ENCODE measurements at regions of chr7 and their contacts with region 1.

Region 1: DNA sequence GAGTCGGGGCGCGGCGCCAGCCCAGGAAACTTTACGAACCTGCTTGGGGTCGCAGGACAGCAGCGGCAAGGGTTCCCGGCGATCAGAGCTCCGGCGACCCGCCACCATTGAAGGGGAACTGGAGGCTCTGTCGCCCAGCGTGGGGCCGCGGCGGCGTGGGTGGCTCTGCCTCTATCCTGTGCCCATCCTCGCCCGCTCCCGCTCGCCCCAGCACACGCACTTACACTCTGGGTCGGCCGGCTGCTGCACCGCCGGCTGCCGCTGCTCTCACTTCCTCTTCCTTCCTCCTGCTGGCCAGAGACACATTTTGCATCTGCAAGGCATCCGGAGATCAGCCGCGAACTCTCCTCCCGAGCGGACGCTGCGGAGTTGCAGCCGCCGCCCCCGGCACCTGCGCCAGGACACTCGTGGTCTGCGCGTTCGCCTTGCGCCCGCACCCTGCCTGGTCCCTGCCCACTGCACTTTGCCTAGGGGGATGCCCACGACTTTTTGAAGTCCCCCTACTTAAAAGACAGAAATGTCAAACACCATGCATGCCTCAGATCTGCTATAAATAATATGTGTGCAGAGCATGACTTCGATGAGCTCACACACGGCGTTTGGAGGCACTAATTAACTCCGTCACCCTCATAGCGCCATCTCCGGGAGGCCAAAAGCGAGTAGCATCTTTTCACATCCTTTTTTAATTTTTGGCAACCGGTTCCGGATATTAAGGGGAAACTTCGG is at the start of gene ELMO1:
- DNase-seq: peak; percentile 85 to 89 (median 88)
- H3K4me3 ChIP-seq: peak within 1 kb of the TSS; percentile 31 to 78
- H3K4me3 Mint-ChIP-seq: peak within 1 kb of the TSS; percentile 96 to 99 (median 98)
- H3K27ac ChIP-seq: peak within 1 kb of the TSS; percentile 85
- H3K27ac Mint-ChIP-seq: peak within 1 kb of the TSS; percentile 97 to 100 (median 99)
- H3K4me1 ChIP-seq: peaks cover 44% of the 10 kb centered on the region
- H3K4me1 Mint-ChIP-seq: peaks cover 39 to 62% (median 49%) of the 10 kb centered on the region in 4 donors
- H3K27me3 ChIP-seq: no peaks in the 10 kb centered on the region
- H3K27me3 Mint-ChIP-seq: peaks cover 2 to 3% of the 10 kb centered on the region in 2 donors
- total RNA-seq, gene ELMO1: 123 to 131 TPM

Region 2: GRCh38 chr7:36723951-36724664 is 724.7 kb before region 1 on chr7 and contains the start of gene AOAH:
- CTCF ChIA-PET with region 1: no interaction called
- POLR2A ChIA-PET with region 1: no interaction called
- intact Hi-C with region 1: loop called (anchors 5 kb)
- DNase-seq: peak; percentile 81 to 87 (median 82)
- H3K4me3 ChIP-seq: peak within 1 kb of the TSS in 1 of 2 donors; percentile 34
- H3K4me3 Mint-ChIP-seq: peak within 1 kb of the TSS; percentile 57 to 91 (median 83)
- H3K27ac ChIP-seq: peak within 1 kb of the TSS; percentile 37
- H3K27ac Mint-ChIP-seq: peak within 1 kb of the TSS; percentile 78 to 95 (median 91)
- H3K4me1 ChIP-seq: peaks cover 72% of the 10 kb centered on the region
- H3K4me1 Mint-ChIP-seq: peaks cover 54 to 83% (median 67%) of the 10 kb centered on the region in 4 donors
- H3K27me3 ChIP-seq: no peaks in the 10 kb centered on the region
- H3K27me3 Mint-ChIP-seq: no peaks in the 10 kb centered on the region
- total RNA-seq, gene AOAH: 4.5 to 5.4 TPM

Region 3: GRCh38 chr7:37234928-37235327 is 213.9 kb before region 1 on chr7:
- CTCF ChIA-PET with region 1: interaction called, 9 read pairs
- POLR2A ChIA-PET with region 1: interaction called, 5 read pairs
- intact Hi-C with region 1: loop called (anchors 2 kb)
- DNase-seq: peak; percentile 11 to 39 (median 24)
- H3K4me3 ChIP-seq: no peak overlapping the region
- H3K4me3 Mint-ChIP-seq: no peak overlapping the region
- H3K27ac ChIP-seq: no peak overlapping the region
- H3K27ac Mint-ChIP-seq: peak overlapping the region in 3 of 7 donors; percentile 37 to 77 (median 51)
- H3K4me1 ChIP-seq: peaks cover 16% of the 10 kb centered on the region
- H3K4me1 Mint-ChIP-seq: peaks cover 23 to 33% (median 28%) of the 10 kb centered on the region in 4 donors
- H3K27me3 ChIP-seq: no peaks in the 10 kb centered on the region
- H3K27me3 Mint-ChIP-seq: no peaks in the 10 kb centered on the region

Region 4: GRCh38 chr7:37311355-37311754 is 137.4 kb before region 1 on chr7:
- CTCF ChIA-PET with region 1: interaction called, 4 read pairs
- POLR2A ChIA-PET with region 1: interaction called, 27 read pairs
- intact Hi-C with region 1: loop called (anchors 1 kb)
- DNase-seq: peak; percentile 47 to 66 (median 61)
- H3K4me3 ChIP-seq: no peak overlapping the region
- H3K4me3 Mint-ChIP-seq: peak overlapping the region in 7 of 8 donors; percentile 44 to 87 (median 75)
- H3K27ac ChIP-seq: peak overlapping the region; percentile 54
- H3K27ac Mint-ChIP-seq: peak overlapping the region; percentile 95 to 99 (median 98)
- H3K4me1 ChIP-seq: peaks cover 53% of the 10 kb centered on the region
- H3K4me1 Mint-ChIP-seq: peaks cover 57 to 89% (median 71%) of the 10 kb centered on the region in 4 donors
- H3K27me3 ChIP-seq: no peaks in the 10 kb centered on the region
- H3K27me3 Mint-ChIP-seq: no peaks in the 10 kb centered on the region

Region 5: DNA sequence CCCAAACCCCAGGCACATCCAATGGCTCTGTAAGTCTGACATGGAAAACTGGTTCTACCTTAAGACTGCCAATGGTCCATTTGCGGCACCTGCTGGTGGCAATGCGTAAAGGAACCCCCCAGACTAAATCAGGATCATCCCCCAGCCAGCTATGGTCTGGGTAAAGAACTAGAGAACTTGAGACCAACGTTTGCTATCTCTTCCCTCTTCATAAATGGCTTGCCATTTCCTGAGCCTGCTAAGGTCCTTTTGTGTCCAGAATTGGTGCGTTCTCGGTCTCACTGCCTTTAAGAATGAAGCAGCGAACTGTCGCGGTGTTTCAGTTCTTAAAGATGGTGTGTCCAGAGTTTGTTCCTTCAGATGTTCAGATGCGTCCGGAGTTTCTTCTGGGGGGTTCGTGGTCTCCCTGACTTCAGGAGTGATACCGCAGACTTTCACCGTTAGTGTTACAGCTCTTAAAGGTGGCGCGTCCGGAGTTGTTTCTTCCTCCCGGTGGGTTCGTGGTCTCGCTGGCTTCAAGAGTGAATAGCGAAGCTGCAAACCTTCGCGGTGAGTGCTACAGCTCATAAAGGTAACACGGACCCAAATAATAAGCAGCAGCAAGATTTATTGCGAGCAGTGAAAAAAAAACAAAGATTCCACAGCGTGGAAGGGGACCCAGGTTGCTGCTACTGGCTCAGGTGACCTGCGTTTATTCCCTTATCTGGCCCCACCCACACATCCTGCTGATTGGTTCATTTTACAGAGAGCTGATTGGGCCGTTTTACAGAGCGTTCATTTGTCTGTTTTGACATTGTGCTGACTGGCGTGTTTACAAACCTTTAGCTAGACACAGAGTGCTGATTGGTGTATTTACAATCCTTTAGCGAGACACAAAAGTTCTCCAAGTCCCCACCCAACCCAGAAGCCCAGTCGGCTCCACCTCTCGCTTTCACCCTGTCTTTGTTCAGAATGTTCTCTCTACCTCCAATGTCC is 95.5 kb before region 1 on chr7:
- CTCF ChIA-PET with region 1: interaction called, 76 read pairs
- POLR2A ChIA-PET with region 1: interaction called, 123 read pairs
- intact Hi-C with region 1: loop called (anchors 1 kb)
- DNase-seq: peak; percentile 79 to 91 (median 83)
- H3K4me3 ChIP-seq: peak overlapping the region; percentile 78 to 91
- H3K4me3 Mint-ChIP-seq: peak overlapping the region; percentile 93 to 97 (median 96)
- H3K27ac ChIP-seq: peak overlapping the region; percentile 73
- H3K27ac Mint-ChIP-seq: peak overlapping the region; percentile 82 to 98 (median 94)
- H3K4me1 ChIP-seq: peaks cover 71% of the 10 kb centered on the region
- H3K4me1 Mint-ChIP-seq: peaks cover 69 to 96% (median 84%) of the 10 kb centered on the region in 4 donors
- H3K27me3 ChIP-seq: no peaks in the 10 kb centered on the region
- H3K27me3 Mint-ChIP-seq: no peaks in the 10 kb centered on the region

Region 6: DNA sequence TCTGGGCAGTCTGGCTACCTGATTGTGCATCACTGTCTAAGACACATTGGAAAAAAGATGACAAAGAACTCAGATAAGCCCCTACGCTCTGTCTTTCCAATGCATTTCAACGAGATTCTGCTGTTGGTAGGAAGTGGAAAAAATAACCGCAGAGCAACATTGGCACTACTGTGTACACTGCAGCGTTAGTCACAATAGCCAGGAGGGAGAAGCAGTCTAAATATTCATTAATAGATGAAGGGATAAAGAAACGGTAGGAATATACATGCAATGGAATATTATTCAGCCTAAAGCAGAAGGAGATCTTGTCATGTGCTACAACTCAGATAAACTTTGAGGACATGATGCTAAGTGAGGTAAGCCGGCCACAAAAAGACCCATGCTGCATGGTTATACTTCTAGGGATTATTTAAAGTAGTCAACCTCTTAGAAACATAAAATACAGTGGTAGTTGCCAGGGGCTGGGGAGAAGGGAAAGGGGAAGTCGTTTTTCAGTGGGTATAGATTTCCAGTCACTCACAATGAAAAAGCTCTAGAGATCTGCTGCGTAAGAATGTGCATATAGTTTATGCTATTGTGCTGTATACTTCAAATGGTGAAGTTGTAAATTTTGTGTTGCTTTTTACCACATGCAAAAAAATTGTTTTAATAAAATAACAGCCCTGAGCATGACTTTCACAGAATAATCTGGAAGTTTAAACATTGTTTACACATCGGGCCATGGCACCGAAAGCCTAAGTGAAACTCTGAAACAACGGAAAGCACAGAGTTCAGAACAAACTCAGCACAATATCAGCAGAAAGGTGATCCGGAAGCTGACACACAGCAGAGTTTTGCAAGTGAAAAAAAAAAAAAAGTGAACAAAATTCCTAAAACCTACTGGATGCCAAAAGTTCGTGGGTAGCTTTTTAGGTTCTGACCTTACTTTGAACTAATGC is 40.2 kb before region 1 on chr7:
- CTCF ChIA-PET with region 1: interaction called, 35 read pairs
- POLR2A ChIA-PET with region 1: interaction called, 98 read pairs
- intact Hi-C with region 1: loop called (anchors 1 kb)
- DNase-seq: peak in 4 of 5 donors; percentile 22 to 67 (median 30)
- H3K4me3 ChIP-seq: peak overlapping the region in 1 of 2 donors; percentile 45
- H3K4me3 Mint-ChIP-seq: peak overlapping the region; percentile 82 to 92 (median 88)
- H3K27ac ChIP-seq: peak overlapping the region; percentile 46
- H3K27ac Mint-ChIP-seq: peak overlapping the region; percentile 86 to 94 (median 92)
- H3K4me1 ChIP-seq: peaks cover 48% of the 10 kb centered on the region
- H3K4me1 Mint-ChIP-seq: peaks cover 48 to 77% (median 62%) of the 10 kb centered on the region in 4 donors
- H3K27me3 ChIP-seq: no peaks in the 10 kb centered on the region
- H3K27me3 Mint-ChIP-seq: no peaks in the 10 kb centered on the region

Region 7: DNA sequence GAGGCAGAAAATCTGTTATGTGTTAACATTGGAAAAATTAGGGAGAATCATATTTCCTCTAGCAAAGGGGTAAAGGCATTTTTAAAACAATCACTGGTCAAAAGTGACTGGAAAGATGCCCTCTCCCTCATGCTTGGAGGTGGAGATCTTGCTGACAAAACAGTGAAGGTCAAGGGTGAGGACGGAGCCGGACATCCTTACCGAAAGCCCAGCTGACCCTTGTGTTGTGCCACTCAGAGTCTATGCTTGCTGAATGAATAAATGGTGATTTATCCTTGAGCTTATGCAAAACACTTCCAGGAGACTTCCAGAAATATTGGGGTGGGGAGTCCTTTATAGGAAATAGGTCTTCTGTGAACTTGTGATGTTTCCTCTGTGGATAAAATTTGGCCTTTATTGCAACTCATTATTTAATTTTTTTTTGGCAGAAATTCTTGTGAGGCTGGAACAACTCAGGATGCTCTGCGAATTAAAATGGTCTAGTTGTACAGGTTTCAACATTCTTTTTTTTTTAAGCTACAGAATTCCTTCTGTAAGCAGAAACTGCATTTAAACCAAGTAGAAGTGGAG is 28.2 kb after region 1 on chr7:
- CTCF ChIA-PET with region 1: no interaction called
- POLR2A ChIA-PET with region 1: no interaction called
- intact Hi-C with region 1: no loop called
- DNase-seq: no peak
- H3K4me3 ChIP-seq: no peak overlapping the region
- H3K4me3 Mint-ChIP-seq: no peak overlapping the region
- H3K27ac ChIP-seq: no peak overlapping the region
- H3K27ac Mint-ChIP-seq: no peak overlapping the region
- H3K4me1 ChIP-seq: no peaks in the 10 kb centered on the region
- H3K4me1 Mint-ChIP-seq: no peaks in the 10 kb centered on the region
- H3K27me3 ChIP-seq: no peaks in the 10 kb centered on the region
- H3K27me3 Mint-ChIP-seq: peaks cover 5 to 16% of the 10 kb centered on the region in 2 donors

Region 8: DNA sequence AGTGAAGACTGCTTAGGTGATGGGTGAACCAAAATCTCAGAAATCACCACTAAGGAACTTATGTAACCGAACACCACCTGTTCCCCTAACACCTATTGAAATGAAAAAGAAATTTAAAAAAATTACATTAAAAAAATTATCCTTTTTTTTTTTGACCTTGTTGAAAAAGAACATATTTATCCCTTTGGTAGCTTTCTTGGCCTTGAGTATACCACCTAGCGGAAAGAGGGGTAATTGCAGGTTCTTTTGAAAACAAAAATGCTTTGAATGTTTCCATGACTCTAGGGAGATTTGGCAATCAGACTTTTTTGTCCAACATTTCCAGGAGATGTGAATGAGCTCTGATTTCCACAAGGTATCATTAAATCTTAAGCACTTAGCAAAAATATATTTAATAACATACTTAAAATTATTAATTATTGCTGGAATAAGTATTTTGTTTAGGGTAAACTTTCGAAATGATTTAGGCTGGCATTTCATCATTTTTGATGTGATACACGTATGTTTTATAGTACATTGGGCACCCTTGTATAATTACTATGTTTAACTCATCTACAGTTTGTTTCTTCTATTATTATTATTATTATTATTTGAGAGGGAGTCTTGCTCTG is 46.9 kb after region 1 on chr7:
- CTCF ChIA-PET with region 1: interaction called, 15 read pairs
- POLR2A ChIA-PET with region 1: interaction called, 4 read pairs
- intact Hi-C with region 1: loop called (anchors 2 kb)
- DNase-seq: peak in 4 of 5 donors; percentile 25 to 43 (median 38)
- H3K4me3 ChIP-seq: no peak overlapping the region
- H3K4me3 Mint-ChIP-seq: no peak overlapping the region
- H3K27ac ChIP-seq: no peak overlapping the region
- H3K27ac Mint-ChIP-seq: no peak overlapping the region
- H3K4me1 ChIP-seq: no peaks in the 10 kb centered on the region
- H3K4me1 Mint-ChIP-seq: no peaks in the 10 kb centered on the region
- H3K27me3 ChIP-seq: no peaks in the 10 kb centered on the region
- H3K27me3 Mint-ChIP-seq: no peaks in the 10 kb centered on the region

Measured in CD4-positive, alpha-beta memory T cell (primary cell).